ENCODE measurements at regions of chr7 and their contacts with region 1.

Region 1: DNA sequence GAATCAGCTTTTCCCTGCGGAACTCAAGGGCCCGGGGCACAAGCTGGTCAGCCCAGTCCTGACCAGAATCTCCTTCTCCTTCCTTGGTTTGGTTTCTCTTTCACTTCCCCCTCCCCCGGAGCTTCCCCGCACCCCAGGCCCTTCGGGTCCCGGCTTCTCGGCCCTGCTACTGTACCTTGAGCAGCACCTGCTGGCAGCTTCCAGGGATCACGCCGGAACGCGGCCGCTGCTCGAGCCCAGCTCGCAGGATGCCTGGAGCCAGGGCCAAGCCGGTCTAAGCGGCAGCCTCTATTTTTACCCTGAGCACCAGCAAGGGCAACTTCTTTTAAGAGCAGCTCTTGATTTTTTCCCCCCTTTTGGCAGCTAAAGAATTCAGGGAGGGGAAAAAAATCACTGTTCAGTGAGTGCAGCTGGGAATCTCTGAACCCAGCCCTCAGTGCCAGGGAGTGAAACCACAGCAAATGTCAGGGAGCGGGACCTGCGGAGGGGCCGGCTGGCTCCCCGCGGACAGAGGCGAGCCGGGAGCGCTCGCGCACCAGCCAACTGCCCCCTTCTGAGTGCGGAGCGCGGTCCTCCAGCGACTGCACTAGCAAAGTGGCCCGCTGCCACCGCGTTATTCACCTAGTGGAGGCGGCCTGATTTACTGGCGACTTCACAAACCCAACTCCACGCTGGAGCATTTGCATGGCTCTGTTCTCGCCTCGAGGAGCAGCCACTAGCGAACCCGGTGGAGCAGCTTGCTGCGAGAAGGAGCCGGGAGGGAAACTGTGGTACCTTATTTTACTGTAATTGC is 2.4 kb upstream of the INHBA start:
- DNase-seq: peak; percentile 86
- H3K4me3 ChIP-seq: peak overlapping the region; percentile 48 to 59 (median 51)
- H3K27ac ChIP-seq: peak overlapping the region; percentile 62
- H3K4me1 ChIP-seq: peaks cover 22% of the 10 kb centered on the region
- H3K27me3 ChIP-seq: no peaks in the 10 kb centered on the region
- CTCF ChIP-seq: peak; percentile 75 to 96

Region 2: DNA sequence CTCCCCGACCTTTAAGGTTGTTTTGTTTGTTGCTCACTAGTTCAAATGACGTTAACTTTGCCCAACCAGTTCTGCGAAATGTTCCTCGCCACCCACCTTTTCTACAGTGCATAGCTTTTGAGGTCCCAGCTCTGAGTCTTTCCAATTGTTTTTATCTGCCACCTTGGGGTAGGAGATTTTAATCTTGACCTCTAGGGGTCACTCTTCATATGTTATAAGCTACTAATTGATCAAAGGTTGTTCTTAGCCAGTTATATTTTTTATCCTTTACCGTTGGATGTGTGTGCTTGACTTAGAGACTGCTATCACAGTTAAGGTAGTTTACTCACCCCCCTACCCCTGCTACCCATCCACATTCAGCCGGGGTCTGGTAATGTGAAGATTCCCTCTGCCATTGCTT is 1198.1 kb before region 1 on chr7:
- CTCF ChIA-PET with region 1: interaction called, 4 read pairs
- dilution Hi-C with region 1: no loop called
- in situ Hi-C with region 1: loop called (anchors 25 kb)
- intact Hi-C with region 1: loop called (anchors 1 kb)
- DNase-seq: peak; percentile 17
- H3K4me3 ChIP-seq: no peak overlapping the region
- H3K27ac ChIP-seq: no peak overlapping the region
- H3K4me1 ChIP-seq: peaks cover 4% of the 10 kb centered on the region
- H3K27me3 ChIP-seq: no peaks in the 10 kb centered on the region
- CTCF ChIP-seq: peak; percentile 26 to 43

Region 3: DNA sequence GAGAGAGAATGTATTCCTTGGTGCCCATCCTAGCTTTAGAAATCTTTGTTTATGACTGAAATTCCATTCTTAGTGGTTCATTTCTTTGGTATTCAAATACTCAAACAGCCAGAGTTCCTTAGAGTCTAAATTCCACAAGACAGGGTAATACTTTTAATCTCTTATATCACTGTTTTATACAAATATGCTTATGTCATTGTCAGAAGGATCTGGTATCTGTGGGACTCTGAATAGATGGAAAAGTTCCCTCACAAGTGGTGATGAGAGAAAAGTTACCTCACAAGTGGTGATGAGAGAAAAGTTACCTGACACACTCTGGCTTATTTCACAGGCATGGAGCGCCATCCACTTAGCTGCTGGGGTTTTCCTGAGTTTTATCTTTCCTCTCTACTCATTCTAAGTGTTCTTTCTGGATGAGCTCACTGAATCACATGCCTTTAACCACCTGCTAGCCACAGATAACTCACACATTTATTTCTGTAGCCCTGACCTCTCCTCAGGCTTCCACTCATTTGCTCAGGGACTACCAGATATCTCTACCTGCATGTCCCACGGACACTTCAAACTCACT is 786.5 kb before region 1 on chr7:
- CTCF ChIA-PET with region 1: no interaction called
- dilution Hi-C with region 1: no loop called
- in situ Hi-C with region 1: no loop called
- intact Hi-C with region 1: loop called (anchors 1 kb)
- DNase-seq: peak; percentile 93
- H3K4me3 ChIP-seq: no peak overlapping the region
- H3K27ac ChIP-seq: peak overlapping the region; percentile 65
- H3K4me1 ChIP-seq: peaks cover 34% of the 10 kb centered on the region
- H3K27me3 ChIP-seq: no peaks in the 10 kb centered on the region
- CTCF ChIP-seq: no peak

Region 4: DNA sequence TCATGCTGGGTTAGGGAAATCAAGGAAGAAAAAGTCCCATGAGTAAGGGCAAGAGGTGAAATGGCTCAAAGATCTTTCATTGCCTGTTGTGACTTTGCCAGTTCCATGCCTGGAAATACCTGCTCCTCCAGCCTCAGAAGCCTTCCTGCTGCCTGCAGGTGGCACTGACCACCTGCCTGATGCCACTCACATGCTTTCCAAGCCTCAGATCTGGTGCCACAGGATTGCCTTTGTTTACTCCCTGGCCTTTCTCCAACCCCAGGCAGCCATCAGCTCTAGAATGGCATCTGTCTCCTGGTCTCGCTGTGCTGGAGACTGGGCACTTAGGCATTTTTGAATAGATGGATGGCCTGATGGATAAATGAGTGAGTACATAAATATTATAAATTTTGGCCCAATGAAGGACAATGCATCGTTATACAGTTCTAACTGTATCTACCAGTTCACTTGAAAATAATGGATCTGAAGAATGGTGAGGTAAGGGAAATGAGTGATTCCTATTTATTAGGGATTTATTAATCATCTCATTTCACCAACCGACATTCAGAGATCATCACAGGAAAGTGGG is 659.7 kb before region 1 on chr7:
- CTCF ChIA-PET with region 1: interaction called, 3 read pairs
- dilution Hi-C with region 1: no loop called
- in situ Hi-C with region 1: loop called in 1 of 2 experiments (anchors 10 kb)
- intact Hi-C with region 1: loop called (anchors 1 kb)
- DNase-seq: peak; percentile 70
- H3K4me3 ChIP-seq: no peak overlapping the region
- H3K27ac ChIP-seq: no peak overlapping the region
- H3K4me1 ChIP-seq: peaks cover 16% of the 10 kb centered on the region
- H3K27me3 ChIP-seq: no peaks in the 10 kb centered on the region
- CTCF ChIP-seq: peak; percentile 71 to 88

Region 5: GRCh38 chr7:41189866-41190265 is 515.4 kb before region 1 on chr7:
- CTCF ChIA-PET with region 1: no interaction called
- dilution Hi-C with region 1: no loop called
- in situ Hi-C with region 1: no loop called
- intact Hi-C with region 1: loop called (anchors 1 kb)
- DNase-seq: peak; percentile 97
- H3K4me3 ChIP-seq: no peak overlapping the region
- H3K27ac ChIP-seq: peak overlapping the region; percentile 99
- H3K4me1 ChIP-seq: peaks cover 38% of the 10 kb centered on the region
- H3K27me3 ChIP-seq: no peaks in the 10 kb centered on the region
- CTCF ChIP-seq: no peak

Region 6: GRCh38 chr7:42115795-42116194 is 410.5 kb after region 1 on chr7:
- CTCF ChIA-PET with region 1: no interaction called
- dilution Hi-C with region 1: no loop called
- in situ Hi-C with region 1: no loop called
- intact Hi-C with region 1: no loop called
- DNase-seq: no peak
- H3K4me3 ChIP-seq: no peak overlapping the region
- H3K27ac ChIP-seq: no peak overlapping the region
- H3K4me1 ChIP-seq: no peaks in the 10 kb centered on the region
- H3K27me3 ChIP-seq: no peaks in the 10 kb centered on the region
- CTCF ChIP-seq: peak in 1 of 2 donors; percentile 15

Measured in mammary epithelial cell (primary cell).